Heart right ventricle (tissue), 16 donors: ENCODE measurements at regions of chrX and their contacts with region 1.

Region 1: DNA sequence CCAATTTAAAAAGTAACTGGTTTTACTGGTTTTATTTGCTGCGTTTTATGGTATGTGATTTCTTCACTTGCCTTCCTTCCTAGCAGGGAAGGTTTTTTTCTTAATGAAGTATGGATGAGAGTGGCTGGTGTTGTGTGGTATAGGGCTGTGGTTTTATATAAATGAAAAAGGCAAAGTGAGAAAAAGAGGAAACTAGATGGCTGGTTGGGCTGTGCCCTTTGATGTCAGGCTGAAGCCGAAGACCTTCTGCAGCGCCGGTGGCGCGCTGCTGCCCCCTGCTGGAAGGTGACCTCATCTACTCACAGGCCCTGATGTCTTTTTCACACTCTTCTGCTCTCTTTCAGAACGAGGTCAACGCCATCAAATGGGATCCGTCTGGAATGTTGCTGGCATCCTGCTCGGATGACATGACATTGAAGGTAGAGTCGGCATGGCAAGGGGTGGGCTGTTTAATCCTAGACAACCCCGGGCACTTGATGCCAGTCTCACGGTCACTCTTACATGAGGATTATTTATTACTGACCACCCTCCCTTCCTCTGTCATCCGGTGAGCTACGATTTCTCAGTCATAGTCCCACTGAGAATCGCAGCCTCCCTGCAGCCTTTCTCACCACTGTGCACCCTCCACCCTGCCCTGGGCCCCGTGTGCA is 56.6 kb downstream of the GPR143 start:
- DNase-seq: peak; percentile 61 to 73
- ATAC-seq: peak; percentile 76 to 85 (median 80)
- H3K4me3 ChIP-seq: no peak overlapping the region
- H3K27ac ChIP-seq: no peak overlapping the region
- H3K4me1 ChIP-seq: peaks cover 0 to 3% (median 0%) of the 10 kb centered on the region in 9 donors
- H3K27me3 ChIP-seq: no peaks in the 10 kb centered on the region
- CTCF ChIP-seq: peak; percentile 52 to 86 (median 84)

Region 2: DNA sequence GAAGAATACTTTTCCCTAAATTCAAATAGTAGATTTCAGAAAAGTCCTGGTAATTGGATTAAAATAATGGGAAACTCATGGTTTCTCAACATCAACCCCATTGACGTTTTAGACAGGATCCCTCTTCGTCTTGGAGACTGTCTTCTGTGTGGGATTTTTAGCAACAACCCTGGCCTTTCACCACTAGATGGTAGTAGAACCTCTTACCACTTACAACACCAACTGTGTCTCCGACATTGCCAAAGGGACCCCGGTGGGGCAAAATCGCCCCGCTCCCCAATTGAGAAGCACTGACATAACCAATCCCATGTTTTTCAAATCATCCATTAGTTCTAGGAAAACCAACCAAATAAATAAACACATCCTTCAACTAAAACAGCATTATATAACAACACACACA is 960.2 kb before region 1 on chrX:
- intact Hi-C with region 1: loop called in 1 of 10 experiments (anchors 5 kb)
- DNase-seq: no peak
- ATAC-seq: no peak
- H3K4me3 ChIP-seq: no peak overlapping the region
- H3K27ac ChIP-seq: no peak overlapping the region
- H3K4me1 ChIP-seq: no peaks in the 10 kb centered on the region
- H3K27me3 ChIP-seq: peaks cover 0 to 22% (median 0%) of the 10 kb centered on the region in 7 donors
- CTCF ChIP-seq: peak; percentile 12 to 61 (median 55)

Region 3: GRCh38 chrX:8820910-8821527 is 888.0 kb before region 1 on chrX:
- intact Hi-C with region 1: loop called in 3 of 10 experiments (anchors 2 to 10 kb)
- DNase-seq: no peak
- ATAC-seq: no peak
- H3K4me3 ChIP-seq: no peak overlapping the region
- H3K27ac ChIP-seq: no peak overlapping the region
- H3K4me1 ChIP-seq: no peaks in the 10 kb centered on the region
- H3K27me3 ChIP-seq: peaks cover 0 to 52% (median 0%) of the 10 kb centered on the region in 7 donors
- CTCF ChIP-seq: no peak

Region 4: GRCh38 chrX:8960817-8961489 is 748.1 kb before region 1 on chrX:
- intact Hi-C with region 1: loop called in 2 of 10 experiments (anchors 5 to 10 kb)
- DNase-seq: no peak
- ATAC-seq: no peak
- H3K4me3 ChIP-seq: no peak overlapping the region
- H3K27ac ChIP-seq: no peak overlapping the region
- H3K4me1 ChIP-seq: no peaks in the 10 kb centered on the region
- H3K27me3 ChIP-seq: peaks cover 0 to 79% (median 0%) of the 10 kb centered on the region in 7 donors
- CTCF ChIP-seq: no peak

Region 5: DNA sequence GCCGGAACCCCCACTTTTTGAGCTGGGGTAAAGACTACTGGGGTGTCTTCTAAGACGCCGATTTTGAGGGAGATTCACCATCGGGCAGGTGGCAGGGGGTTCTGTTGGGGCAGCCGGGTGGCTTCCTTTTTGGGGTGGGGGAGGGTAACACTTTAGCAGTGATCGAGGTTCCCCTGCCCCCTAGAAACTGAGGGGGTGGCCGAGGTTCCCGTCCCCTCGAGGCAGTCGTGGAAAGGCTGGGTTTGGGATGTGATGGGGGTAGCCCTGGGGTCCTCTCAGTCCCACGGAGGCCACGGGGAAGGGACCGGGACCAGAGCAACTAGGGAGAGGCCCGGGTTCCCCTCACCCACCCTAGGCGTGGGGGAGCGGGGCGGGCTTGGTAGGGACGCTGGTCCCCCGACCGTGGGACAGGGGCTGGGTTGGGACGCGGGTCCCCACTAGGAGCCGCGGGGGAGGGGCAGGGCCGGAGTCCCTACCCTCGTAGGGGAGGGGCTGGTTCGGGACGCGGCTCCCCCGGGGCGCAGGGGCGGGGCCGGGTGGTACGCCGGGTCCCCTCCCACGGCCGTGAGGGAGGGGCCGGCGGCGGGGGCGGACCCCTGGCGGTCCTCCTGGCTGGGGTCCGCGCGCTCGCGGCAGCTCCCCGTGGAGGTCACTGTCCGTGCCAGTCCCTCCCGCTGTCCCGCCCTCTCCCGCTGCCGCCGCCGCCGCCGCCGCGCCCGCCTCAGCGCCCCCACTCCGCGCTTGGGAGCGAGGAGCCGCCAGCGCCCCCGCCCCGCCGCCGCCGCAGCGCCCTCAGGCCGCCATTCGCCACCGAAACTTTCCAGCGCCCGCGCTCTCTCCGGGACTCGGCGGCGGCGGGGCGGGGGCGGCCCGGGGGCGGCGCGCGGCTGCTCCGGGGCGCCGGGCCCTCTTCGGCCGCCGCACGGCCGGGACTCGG is 244.3 kb before region 1 on chrX and contains the start of gene TBL1X:
- intact Hi-C with region 1: loop called in 2 of 10 experiments (anchors 2 to 5 kb)
- DNase-seq: peak; percentile 47 to 69
- ATAC-seq: peak; percentile 53 to 72 (median 66)
- H3K4me3 ChIP-seq: peak within 1 kb of the TSS; percentile 44 to 77 (median 71)
- H3K27ac ChIP-seq: peak within 1 kb of the TSS; percentile 52 to 84 (median 78)
- H3K4me1 ChIP-seq: peaks cover 0 to 46% (median 14%) of the 10 kb centered on the region in 9 donors
- H3K27me3 ChIP-seq: peaks cover 0 to 86% (median 0%) of the 10 kb centered on the region in 7 donors
- CTCF ChIP-seq: no peak
- total RNA-seq, gene TBL1X: 6.5 to 14.1 (median 10.2) TPM

Region 6: DNA sequence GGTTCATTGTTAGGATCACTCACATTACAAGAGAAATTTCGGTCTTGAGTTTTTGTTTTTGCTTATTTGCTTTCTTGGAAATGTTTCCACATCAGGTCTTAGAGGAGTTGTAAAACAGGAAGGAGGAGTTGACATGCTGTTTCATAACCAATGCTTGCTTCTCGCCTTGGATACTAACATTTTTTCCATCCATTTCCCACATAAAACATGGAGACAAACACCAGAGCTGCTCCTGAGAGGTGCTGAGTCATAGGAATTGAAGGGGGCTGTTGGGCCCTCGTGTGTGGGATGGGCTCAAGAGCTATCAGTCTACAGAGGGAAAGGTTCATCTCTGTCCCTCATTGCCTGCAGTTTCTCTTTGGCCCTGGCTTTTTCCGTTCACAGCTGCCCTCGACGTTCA is 214.3 kb before region 1 on chrX:
- intact Hi-C with region 1: no loop called
- DNase-seq: no peak
- ATAC-seq: no peak
- H3K4me3 ChIP-seq: no peak overlapping the region
- H3K27ac ChIP-seq: no peak overlapping the region
- H3K4me1 ChIP-seq: no peaks in the 10 kb centered on the region
- H3K27me3 ChIP-seq: peaks cover 0 to 5% (median 0%) of the 10 kb centered on the region in 7 donors
- CTCF ChIP-seq: no peak